Activated CD4-positive, alpha-beta memory T cell treated with anti-CD3 and anti-CD28 coated beads for 36 hours (primary cell): ENCODE measurements at regions of chr10 and their contacts with region 1.

Region 1: GRCh38 chr10:70820976-70821755 is 5.4 kb downstream of the SGPL1 start:
- DNase-seq: peak; percentile 38
- H3K4me3 Mint-ChIP-seq: peak overlapping the region; percentile 18
- H3K27ac Mint-ChIP-seq: peak overlapping the region; percentile 92
- H3K4me1 Mint-ChIP-seq: peaks cover 65% of the 10 kb centered on the region
- H3K27me3 Mint-ChIP-seq: no peaks in the 10 kb centered on the region

Region 2: DNA sequence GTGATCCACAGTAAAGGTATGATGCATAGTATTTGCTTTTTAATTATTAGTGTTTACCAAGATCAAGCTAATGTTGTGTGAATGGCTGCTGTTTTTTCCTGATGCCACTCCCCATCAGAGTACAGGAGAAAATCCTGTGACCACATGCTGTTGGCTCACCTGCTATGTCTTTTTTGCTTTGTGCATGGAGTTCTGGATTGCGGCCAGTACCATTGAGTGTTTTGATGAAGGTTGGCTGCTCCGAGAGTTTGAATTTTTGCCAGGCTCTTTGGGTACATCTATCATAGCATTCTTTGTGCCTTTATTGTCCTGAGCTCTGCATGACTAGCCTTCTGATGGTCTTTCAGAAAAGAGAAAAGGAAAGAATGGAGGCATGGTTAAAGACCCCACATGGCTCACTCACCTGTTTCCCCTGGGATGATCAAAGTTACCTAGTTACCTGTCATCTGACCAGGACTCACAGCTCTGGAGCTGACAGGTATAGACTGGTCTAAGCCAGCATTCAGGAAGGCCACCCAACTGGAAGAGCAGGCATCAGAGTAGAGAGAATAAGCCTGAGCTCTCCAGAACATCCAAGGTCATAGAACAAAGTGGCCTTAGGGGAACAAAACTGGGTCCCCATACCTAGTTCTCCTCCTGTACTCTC is 17.3 kb before region 1 on chr10:
- CTCF ChIA-PET with region 1: no interaction called
- POLR2A ChIA-PET with region 1: no interaction called
- intact Hi-C with region 1: no loop called
- DNase-seq: no peak
- H3K4me3 Mint-ChIP-seq: no peak overlapping the region
- H3K27ac Mint-ChIP-seq: no peak overlapping the region
- H3K4me1 Mint-ChIP-seq: no peaks in the 10 kb centered on the region
- H3K27me3 Mint-ChIP-seq: peaks cover 19% of the 10 kb centered on the region

Region 3: GRCh38 chr10:70840836-70841235 is 19.7 kb after region 1 on chr10:
- CTCF ChIA-PET with region 1: interaction called, 6 read pairs
- POLR2A ChIA-PET with region 1: interaction called, 5 read pairs
- intact Hi-C with region 1: loop called (anchors 2 kb)
- DNase-seq: no peak
- H3K4me3 Mint-ChIP-seq: no peak overlapping the region
- H3K27ac Mint-ChIP-seq: no peak overlapping the region
- H3K4me1 Mint-ChIP-seq: peaks cover 71% of the 10 kb centered on the region
- H3K27me3 Mint-ChIP-seq: no peaks in the 10 kb centered on the region

Region 4: DNA sequence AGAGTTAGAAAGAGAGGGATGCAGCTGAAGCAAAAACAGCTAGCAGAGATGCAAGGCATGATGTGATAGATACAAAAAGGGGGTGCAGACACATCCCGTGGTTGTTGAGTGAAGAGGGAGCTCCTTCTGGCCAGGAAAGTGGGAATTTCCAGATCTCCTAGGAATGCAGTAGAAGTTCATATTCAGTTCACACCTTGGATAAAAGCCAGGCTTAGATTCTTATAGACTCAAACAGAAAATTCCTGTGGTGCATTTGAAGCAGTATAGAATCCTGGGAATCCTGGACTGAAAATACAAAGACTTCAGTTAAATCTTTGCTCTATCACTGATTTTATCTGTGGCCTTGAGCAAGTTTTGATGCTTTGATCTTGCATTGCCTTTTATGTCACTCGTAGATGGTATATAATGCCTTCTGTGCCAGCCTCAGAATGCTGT is 28.4 kb after region 1 on chr10:
- CTCF ChIA-PET with region 1: interaction called, 6 read pairs
- POLR2A ChIA-PET with region 1: interaction called, 4 read pairs
- intact Hi-C with region 1: loop called (anchors 1 kb)
- DNase-seq: no peak
- H3K4me3 Mint-ChIP-seq: no peak overlapping the region
- H3K27ac Mint-ChIP-seq: no peak overlapping the region
- H3K4me1 Mint-ChIP-seq: peaks cover 35% of the 10 kb centered on the region
- H3K27me3 Mint-ChIP-seq: no peaks in the 10 kb centered on the region

Region 5: GRCh38 chr10:70863470-70864160 is 42.4 kb after region 1 on chr10:
- CTCF ChIA-PET with region 1: interaction called, 5 read pairs
- POLR2A ChIA-PET with region 1: interaction called, 4 read pairs
- intact Hi-C with region 1: loop called (anchors 1 kb)
- DNase-seq: no peak
- H3K4me3 Mint-ChIP-seq: no peak overlapping the region
- H3K27ac Mint-ChIP-seq: peak overlapping the region; percentile 82
- H3K4me1 Mint-ChIP-seq: peaks cover 23% of the 10 kb centered on the region
- H3K27me3 Mint-ChIP-seq: no peaks in the 10 kb centered on the region